Naive thymus-derived CD8-positive, alpha-beta T cell (primary cell): ENCODE measurements at regions of chr17 and their contacts with region 1.

Region 1: DNA sequence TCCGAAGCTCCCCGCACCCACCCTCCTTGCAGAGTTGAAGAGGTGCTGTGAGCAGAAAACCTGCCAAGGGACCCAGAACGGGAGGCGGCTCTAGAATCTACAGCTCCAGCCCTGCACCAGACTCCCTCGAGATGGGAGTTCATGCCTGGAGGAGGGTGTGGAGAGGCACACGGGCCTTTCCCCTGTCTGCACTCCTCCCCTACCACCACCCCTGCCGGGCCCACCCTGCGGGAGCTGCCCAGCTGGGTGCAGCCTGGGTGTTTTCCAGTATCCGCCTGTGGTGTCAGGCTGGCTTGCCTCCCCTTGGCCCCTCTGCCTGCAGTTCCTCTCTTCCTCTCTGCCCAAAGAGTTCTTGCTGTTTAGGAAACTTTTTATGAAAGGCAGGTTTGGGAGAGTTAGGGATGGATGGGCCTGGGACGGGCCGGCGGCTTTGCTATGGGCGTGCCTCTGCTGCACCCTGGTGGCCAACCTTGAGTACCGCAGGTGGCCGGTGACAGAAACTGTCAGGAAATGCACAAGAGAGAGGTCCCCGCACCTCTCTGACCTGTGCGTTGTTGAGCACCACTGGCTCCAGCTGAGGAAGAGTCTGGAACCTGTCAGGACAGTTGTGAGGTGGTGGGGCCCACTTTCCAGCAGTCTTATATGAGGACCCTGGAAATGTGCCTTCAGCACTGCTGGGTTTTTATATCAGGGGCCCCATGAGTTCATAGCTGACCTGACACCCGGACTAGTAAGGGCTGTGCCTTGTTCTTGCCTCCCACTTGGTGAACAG is 354.1 kb downstream of the SEC14L1 start:
- DNase-seq: peak; percentile 59 to 83 (median 75)
- ATAC-seq: peak; percentile 64
- H3K4me3 Mint-ChIP-seq: peak overlapping the region in 3 of 10 donors; percentile 6 to 49 (median 16)
- H3K27ac Mint-ChIP-seq: peak overlapping the region; percentile 80 to 94 (median 90)
- H3K4me1 Mint-ChIP-seq: peaks cover 12 to 34% (median 21%) of the 10 kb centered on the region in 4 donors
- H3K27me3 Mint-ChIP-seq: no peaks in the 10 kb centered on the region

Region 2: GRCh38 chr17:77404812-77405581 is 89.9 kb before region 1 on chr17:
- POLR2A ChIA-PET with region 1: interaction called, 26 read pairs
- DNase-seq: peak; percentile 48 to 88 (median 81)
- ATAC-seq: peak; percentile 67 to 77
- H3K4me3 Mint-ChIP-seq: peak overlapping the region; percentile 91 to 99 (median 97)
- H3K27ac Mint-ChIP-seq: peak overlapping the region; percentile 93 to 100 (median 98)
- H3K4me1 Mint-ChIP-seq: peaks cover 67 to 99% (median 96%) of the 10 kb centered on the region in 4 donors
- H3K27me3 Mint-ChIP-seq: no peaks in the 10 kb centered on the region

Region 3: DNA sequence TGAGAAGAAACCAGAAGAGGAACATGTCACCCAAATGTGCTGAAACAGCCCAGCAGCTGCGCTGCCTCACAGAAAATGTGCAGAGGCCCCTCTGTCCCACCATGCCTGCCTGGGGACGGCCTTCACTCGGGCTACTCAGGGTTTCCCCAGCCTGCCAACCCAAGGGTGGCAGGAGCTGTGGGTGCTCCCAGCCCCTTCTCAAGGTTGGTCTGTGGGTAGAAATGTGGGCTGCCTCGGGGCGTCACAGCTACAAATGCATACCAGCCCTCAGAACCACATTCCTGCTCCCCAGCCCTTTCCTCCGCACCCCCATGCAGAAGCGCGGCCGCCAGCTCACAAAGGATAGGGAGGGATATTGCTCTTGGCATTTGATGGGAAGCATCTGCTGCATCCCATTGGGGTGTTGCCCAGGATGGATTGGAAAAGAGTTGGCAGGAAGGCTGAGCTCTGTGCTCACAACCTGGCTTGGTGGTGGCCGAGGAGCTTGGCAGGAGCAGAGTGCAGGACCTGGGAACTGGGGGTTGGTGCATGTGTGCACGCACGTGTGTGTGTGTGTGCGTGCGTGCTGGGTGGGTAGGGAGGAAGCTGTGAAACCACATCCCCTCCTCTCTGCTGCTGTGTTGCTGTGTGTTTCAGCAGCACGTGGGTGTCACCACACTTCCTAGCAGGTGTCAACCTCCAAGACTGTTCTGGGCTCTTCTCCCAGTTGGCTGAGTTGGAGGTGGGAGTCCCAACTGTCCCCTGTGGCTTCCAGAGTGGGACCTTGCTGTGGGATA is 49.7 kb before region 1 on chr17:
- POLR2A ChIA-PET with region 1: interaction called, 243 read pairs
- DNase-seq: peak; percentile 67 to 98 (median 88)
- ATAC-seq: peak; percentile 60 to 77
- H3K4me3 Mint-ChIP-seq: peak overlapping the region; percentile 72 to 99 (median 86)
- H3K27ac Mint-ChIP-seq: peak overlapping the region; percentile 93 to 100 (median 99)
- H3K4me1 Mint-ChIP-seq: peaks cover 59 to 98% (median 96%) of the 10 kb centered on the region in 4 donors
- H3K27me3 Mint-ChIP-seq: peaks cover 0 to 4% (median 0%) of the 10 kb centered on the region in 5 donors

Region 4: GRCh38 chr17:77456951-77457548 is 37.8 kb before region 1 on chr17:
- POLR2A ChIA-PET with region 1: interaction called, 76 read pairs
- DNase-seq: peak in 5 of 10 donors; percentile 34 to 70 (median 52)
- ATAC-seq: peak; percentile 13 to 22
- H3K4me3 Mint-ChIP-seq: peak overlapping the region; percentile 91 to 98 (median 96)
- H3K27ac Mint-ChIP-seq: peak overlapping the region; percentile 92 to 99 (median 99)
- H3K4me1 Mint-ChIP-seq: peaks cover 34 to 78% (median 64%) of the 10 kb centered on the region in 4 donors
- H3K27me3 Mint-ChIP-seq: no peaks in the 10 kb centered on the region

Region 5: DNA sequence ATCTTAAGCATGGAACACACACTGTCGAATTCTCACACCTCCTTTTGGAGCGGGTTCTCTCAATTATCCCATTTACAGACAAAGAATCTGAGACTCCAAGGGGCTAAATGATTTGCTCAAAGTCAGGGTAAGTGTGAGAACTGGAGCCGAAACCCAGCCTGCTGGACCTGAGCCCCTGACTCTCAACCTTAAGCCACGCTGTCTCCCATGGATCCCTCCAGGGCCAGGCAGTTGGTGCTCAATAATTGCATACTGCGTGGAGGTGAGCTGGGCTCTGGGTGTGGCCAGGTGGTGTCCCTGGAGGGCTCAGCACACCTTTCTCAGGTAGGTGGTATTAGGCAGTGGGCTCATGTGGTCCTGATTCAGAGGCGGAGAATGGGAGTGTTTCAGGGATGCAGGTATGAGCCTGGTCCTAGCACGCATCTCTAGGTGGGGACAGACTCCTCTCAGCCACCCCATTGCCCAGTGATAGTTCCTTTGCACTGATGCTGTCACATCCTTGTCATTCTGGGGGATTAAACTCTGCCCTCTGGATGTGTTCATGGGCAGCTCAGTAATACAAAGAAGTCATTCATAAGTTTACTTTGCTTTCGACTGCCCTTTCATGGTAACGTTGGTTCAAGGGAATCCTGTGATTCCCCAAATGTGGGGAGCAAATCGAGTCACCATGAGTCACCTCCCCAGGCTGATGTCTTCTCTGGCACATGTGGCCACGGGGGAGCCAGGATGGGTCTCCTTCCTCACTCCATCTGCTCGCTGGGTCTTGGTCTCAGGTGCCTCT is 64.2 kb after region 1 on chr17:
- POLR2A ChIA-PET with region 1: no interaction called
- DNase-seq: no peak
- ATAC-seq: no peak
- H3K4me3 Mint-ChIP-seq: no peak overlapping the region
- H3K27ac Mint-ChIP-seq: no peak overlapping the region
- H3K4me1 Mint-ChIP-seq: no peaks in the 10 kb centered on the region
- H3K27me3 Mint-ChIP-seq: peaks cover 0 to 4% (median 0%) of the 10 kb centered on the region in 5 donors